Activated CD4-positive, alpha-beta T cell treated with anti-CD3 and anti-CD28 coated beads for 36 hours (primary cell): ENCODE measurements at regions of chr19 and their contacts with region 1.

Region 1: DNA sequence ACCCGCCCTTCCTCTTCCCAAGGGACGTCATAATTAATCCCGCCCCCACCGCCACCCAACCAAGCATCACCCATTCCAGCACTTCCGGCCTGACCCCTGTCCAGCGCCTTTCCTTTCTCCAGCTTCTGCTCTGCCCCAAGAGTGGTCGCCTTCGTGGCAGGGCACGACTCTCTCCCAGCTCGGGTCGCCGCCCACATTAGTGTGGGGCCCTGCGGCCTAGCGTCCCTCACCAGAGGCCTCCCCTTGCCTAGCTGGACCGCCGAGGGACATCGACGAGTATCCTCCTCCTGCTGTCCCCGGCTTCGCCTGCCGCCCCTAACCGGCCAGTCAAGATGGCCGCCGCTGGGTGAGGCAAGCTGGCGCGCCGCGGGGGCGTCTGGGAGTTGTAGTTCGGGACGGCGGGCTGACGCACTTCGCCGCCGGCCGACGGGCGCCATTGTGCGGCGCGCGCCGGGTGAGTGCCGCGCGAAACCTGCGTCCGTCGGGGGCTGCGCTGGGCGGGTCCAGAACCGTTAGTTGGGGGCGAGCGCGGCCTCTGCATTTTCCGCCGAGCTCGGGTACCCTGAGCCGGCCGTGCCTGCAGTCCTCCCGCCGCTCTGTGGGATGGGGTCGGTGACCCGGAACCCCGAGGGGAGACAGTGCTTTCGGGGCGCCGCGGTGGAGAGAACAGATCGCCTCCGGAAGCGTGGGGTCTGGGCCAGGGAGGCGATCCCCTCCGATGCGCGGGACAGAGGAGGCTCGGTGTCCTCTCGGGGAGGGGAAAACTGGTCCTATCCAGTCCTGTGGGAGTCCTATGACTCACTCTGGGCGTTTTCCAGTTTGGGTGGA is at the start of gene ZNF274:
- DNase-seq: peak; percentile 98
- ATAC-seq: peak; percentile 91
- H3K4me3 Mint-ChIP-seq: peak within 1 kb of the TSS; percentile 88
- H3K27ac Mint-ChIP-seq: peak within 1 kb of the TSS; percentile 99
- H3K4me1 Mint-ChIP-seq: peaks cover 16% of the 10 kb centered on the region
- H3K27me3 Mint-ChIP-seq: no peaks in the 10 kb centered on the region
- total RNA-seq, gene ZNF274: 20.2 to 20.5 TPM

Region 2: GRCh38 chr19:57240311-57241090 is 942.7 kb before region 1 on chr19 and contains the start of gene ZNF805:
- CTCF ChIA-PET with region 1: no interaction called
- POLR2A ChIA-PET with region 1: no interaction called
- intact Hi-C with region 1: loop called in 1 of 2 experiments (anchors 1 kb)
- DNase-seq: peak; percentile 97
- ATAC-seq: peak; percentile 95
- H3K4me3 Mint-ChIP-seq: peak within 1 kb of the TSS; percentile 80
- H3K27ac Mint-ChIP-seq: peak within 1 kb of the TSS; percentile 92
- H3K4me1 Mint-ChIP-seq: peaks cover 23% of the 10 kb centered on the region
- H3K27me3 Mint-ChIP-seq: no peaks in the 10 kb centered on the region
- total RNA-seq, gene ZNF805: 6.4 to 7.1 TPM

Region 3: DNA sequence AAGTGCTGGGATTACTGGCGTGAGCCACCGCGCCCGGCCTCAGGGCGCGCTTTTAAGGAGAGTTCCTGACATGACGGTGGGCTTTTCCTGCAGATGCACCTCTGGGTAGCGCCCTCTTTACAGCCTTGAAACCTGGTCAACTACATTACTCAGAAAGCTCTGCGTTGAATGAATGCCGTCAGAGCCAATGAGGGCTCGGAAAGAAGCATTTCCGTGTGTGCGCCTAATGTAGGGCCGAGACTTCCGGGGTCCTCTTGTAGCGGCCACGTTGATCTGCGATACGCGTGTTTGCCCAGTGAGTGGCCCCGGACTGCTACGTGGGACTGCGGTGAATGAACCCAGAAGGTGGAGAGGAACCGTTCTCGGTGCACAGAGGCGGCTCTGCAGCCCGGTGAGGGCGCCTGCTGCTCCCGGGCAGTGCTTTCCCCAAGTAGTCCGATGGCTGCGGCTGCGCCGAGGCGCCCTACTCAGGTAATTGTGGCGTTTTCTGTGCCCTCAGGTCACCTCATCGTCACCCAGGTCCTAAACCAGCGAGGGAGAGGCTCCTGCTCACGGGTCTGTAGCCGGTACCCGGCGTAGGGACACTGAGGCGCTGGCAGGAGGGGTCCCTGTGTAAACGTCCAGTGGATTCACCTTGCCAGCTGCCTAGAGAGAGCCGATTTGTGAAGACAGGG is 363.6 kb before region 1 on chr19:
- CTCF ChIA-PET with region 1: no interaction called
- POLR2A ChIA-PET with region 1: no interaction called
- intact Hi-C with region 1: loop called in 1 of 2 experiments (anchors 2 kb)
- DNase-seq: peak; percentile 89
- ATAC-seq: peak; percentile 90
- H3K4me3 Mint-ChIP-seq: peak overlapping the region; percentile 97
- H3K27ac Mint-ChIP-seq: peak overlapping the region; percentile 94
- H3K4me1 Mint-ChIP-seq: peaks cover 51% of the 10 kb centered on the region
- H3K27me3 Mint-ChIP-seq: no peaks in the 10 kb centered on the region

Region 4: DNA sequence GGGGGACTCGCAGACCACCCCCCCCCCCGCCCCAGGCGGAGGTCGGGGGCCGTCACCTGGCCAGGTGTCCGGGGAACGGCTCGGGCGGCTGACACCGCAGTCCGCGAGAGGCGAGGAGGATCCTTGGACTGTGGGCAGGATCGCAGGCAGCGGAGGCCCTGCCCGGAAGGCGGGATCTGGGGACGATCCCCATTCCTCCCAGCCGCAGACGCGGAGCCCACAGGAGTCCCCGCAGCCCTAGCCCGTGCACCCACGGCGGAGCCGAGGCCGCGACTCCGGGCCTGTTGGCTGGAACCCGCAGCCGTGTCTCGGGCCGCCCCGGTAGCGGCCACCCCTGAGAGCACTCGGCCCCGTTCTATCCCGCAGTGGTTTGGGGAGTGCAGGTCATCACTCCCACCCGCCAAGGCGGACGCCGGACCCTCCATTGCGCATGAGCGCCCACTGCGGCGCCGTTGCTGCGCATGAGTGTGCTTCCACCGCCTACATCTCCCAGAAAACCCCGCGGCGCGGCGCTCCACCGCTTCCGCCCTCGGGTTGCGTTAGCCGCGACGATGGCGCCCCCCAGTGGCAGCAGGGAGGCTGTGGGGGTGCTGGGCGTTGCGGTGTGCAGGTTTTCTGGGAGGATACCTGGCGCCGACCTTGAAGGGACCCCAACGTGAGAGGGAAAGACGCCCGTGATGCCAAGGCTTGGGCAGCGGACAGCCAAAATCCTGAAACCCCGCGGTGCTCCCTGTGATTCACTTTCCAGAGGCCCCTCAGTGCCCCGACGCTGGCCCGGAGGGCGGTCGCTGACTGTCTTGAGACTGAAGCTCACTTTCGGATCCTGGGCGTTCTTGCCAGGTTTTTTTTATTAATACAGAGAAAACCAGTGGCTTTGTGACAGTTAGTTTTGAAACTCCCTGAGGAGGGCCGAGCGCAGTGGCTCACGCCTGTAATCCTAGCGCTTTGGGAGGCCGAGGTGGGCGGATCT is 28.2 kb before region 1 on chr19:
- CTCF ChIA-PET with region 1: no interaction called
- POLR2A ChIA-PET with region 1: no interaction called
- intact Hi-C with region 1: loop called in 1 of 2 experiments (anchors 2 kb)
- DNase-seq: peak; percentile 99
- ATAC-seq: peak; percentile 87
- H3K4me3 Mint-ChIP-seq: peak overlapping the region; percentile 71
- H3K27ac Mint-ChIP-seq: peak overlapping the region; percentile 51
- H3K4me1 Mint-ChIP-seq: peaks cover 10% of the 10 kb centered on the region
- H3K27me3 Mint-ChIP-seq: no peaks in the 10 kb centered on the region

Region 5: GRCh38 chr19:58380722-58381466 is 197.7 kb after region 1 on chr19 and contains the start of gene ZNF837:
- CTCF ChIA-PET with region 1: no interaction called
- POLR2A ChIA-PET with region 1: no interaction called
- intact Hi-C with region 1: loop called in 1 of 2 experiments (anchors 1 kb)
- DNase-seq: peak; percentile 99
- ATAC-seq: peak; percentile 89
- H3K4me3 Mint-ChIP-seq: peak within 1 kb of the TSS; percentile 91
- H3K27ac Mint-ChIP-seq: peak within 1 kb of the TSS; percentile 94
- H3K4me1 Mint-ChIP-seq: peaks cover 19% of the 10 kb centered on the region
- H3K27me3 Mint-ChIP-seq: no peaks in the 10 kb centered on the region
- total RNA-seq, gene ZNF837: 2.0 to 2.5 TPM

Region 6: DNA sequence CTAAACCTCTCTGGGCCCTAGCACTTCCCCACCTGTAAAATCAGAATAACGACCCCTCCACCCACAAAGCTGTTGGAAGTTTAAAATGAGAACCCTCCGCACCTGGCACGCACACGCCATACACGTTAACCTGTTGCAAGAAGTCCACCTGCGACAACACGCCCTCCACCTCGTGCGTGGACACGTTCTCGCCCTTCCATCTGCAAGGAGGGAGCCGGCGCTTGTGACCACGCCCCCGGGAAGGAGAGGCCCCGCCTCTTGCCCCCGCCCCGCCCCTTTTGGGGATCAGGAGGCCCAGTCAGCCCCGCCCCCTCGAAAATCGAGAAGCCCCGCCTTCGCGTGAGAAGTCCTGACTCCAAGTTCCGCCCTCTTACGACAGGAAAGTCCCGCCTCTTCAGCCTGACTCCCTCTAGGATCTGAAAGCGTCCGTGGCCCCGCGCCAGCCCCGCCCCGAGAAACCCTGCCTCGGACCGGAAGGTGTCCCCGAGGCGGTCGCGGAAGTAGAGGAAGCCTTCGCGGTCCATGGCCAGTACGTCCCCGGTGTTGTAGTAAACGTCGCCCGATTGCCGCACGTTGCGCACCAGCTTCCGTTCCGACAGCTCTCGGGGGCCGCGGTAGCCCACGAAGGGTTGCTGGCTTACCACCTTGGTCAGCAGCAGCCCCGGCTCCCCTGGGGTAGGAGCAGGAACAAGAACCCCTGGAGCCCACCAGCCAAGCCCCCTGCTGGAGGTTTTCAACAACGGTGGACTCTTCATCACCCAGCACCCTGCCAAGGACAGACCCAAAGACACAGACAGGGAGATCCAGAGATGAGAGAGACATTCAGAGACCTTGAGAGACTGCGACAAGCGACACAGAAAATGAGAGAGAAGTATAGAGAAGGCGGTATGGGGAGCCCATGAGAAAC is 316.1 kb after region 1 on chr19:
- CTCF ChIA-PET with region 1: no interaction called
- POLR2A ChIA-PET with region 1: no interaction called
- intact Hi-C with region 1: loop called in 1 of 2 experiments (anchors 1 kb)
- DNase-seq: peak; percentile 100
- ATAC-seq: peak; percentile 99
- H3K4me3 Mint-ChIP-seq: peak overlapping the region; percentile 81
- H3K27ac Mint-ChIP-seq: peak overlapping the region; percentile 95
- H3K4me1 Mint-ChIP-seq: peaks cover 19% of the 10 kb centered on the region
- H3K27me3 Mint-ChIP-seq: no peaks in the 10 kb centered on the region

Region 7: GRCh38 chr19:58572818-58573657 is 389.8 kb after region 1 on chr19 and contains the start of gene MZF1:
- CTCF ChIA-PET with region 1: no interaction called
- POLR2A ChIA-PET with region 1: no interaction called
- intact Hi-C with region 1: loop called in 1 of 2 experiments (anchors 1 kb)
- DNase-seq: peak; percentile 100
- ATAC-seq: peak; percentile 69
- H3K4me3 Mint-ChIP-seq: peak within 1 kb of the TSS; percentile 95
- H3K27ac Mint-ChIP-seq: peak within 1 kb of the TSS; percentile 100
- H3K4me1 Mint-ChIP-seq: peaks cover 38% of the 10 kb centered on the region
- H3K27me3 Mint-ChIP-seq: no peaks in the 10 kb centered on the region
- total RNA-seq, gene MZF1: 14.3 to 15.0 TPM